ENCODE measurements at regions of chr5 and their contacts with region 1.

Region 1: GRCh38 chr5:78537821-78538220 is 110.8 kb downstream of the LHFPL2 start:
- DNase-seq: no peak
- ATAC-seq: peak; percentile 72

Region 2: GRCh38 chr5:78320401-78320800 is 217.4 kb before region 1 on chr5:
- intact Hi-C with region 1: loop called (anchors 10 kb)
- DNase-seq: no peak
- ATAC-seq: no peak

Region 3: DNA sequence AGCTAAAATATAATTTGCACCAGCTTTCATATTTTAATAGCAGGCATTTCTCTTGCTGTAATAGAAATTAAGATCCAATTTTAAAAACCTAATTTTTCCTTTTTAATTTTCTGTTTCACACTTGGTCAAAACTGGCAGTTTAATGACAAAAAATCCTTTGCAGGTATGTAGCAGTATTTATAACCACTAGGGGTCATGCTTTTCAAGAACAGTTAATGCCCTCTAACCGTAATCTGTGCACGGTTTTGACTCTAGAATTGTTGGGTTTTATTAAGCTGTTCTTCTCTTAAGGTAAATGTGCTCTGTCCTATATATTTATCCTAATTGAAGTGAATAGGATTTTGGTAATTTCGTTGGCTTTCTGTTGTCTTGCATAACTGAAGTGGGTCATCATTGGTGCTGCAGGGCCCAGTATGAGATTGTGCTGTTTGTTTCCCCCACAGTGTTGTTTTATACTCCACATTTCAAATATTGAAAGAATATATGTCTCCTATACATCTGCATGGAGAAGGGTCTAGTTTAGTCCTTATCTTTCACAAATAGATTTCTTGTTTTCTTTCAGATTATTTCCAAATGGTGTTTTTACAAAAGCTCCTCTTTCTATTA is 70.0 kb before region 1 on chr5:
- intact Hi-C with region 1: loop called (anchors 5 kb)
- DNase-seq: no peak
- ATAC-seq: peak; percentile 54